ENCODE measurements at regions of chr2 and their contacts with region 1.

Region 1: GRCh38 chr2:241224018-241224850 is 35.8 kb downstream of the ANO7 start:
- DNase-seq: peak; percentile 40 to 58
- ATAC-seq: peak; percentile 16 to 72 (median 57)
- H3K4me3 ChIP-seq: no peak overlapping the region
- H3K27ac ChIP-seq: peak overlapping the region in 3 of 10 donors; percentile 18 to 30 (median 29)
- H3K4me1 ChIP-seq: peaks cover 2 to 50% (median 23%) of the 10 kb centered on the region in 9 donors
- H3K27me3 ChIP-seq: no peaks in the 10 kb centered on the region
- CTCF ChIP-seq: no peak

Region 2: DNA sequence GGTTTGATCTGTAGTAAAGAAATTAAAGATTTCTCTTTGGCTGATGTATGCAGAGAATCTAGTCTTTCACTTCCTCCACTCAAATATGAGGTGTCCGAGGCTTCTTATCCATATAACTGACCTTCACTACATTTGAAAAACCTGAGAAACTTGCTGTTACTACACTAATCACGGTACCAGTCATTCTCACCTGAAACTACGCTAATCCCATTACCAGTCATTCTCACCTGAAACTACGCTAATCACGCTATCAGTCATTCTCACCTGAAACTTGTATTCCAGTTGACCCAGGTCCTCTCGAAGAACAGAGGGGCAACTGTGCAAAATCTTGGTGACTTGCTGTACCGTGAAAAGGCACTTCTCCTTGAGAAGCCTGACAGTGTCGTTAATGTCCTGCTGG is 127.3 kb before region 1 on chr2:
- intact Hi-C with region 1: loop called in 2 of 10 experiments (anchors 10 kb)
- DNase-seq: no peak
- ATAC-seq: no peak
- H3K4me3 ChIP-seq: no peak overlapping the region
- H3K27ac ChIP-seq: no peak overlapping the region
- H3K4me1 ChIP-seq: peaks cover 6 to 19% (median 13%) of the 10 kb centered on the region in 9 donors
- H3K27me3 ChIP-seq: no peaks in the 10 kb centered on the region
- CTCF ChIP-seq: no peak

Region 3: DNA sequence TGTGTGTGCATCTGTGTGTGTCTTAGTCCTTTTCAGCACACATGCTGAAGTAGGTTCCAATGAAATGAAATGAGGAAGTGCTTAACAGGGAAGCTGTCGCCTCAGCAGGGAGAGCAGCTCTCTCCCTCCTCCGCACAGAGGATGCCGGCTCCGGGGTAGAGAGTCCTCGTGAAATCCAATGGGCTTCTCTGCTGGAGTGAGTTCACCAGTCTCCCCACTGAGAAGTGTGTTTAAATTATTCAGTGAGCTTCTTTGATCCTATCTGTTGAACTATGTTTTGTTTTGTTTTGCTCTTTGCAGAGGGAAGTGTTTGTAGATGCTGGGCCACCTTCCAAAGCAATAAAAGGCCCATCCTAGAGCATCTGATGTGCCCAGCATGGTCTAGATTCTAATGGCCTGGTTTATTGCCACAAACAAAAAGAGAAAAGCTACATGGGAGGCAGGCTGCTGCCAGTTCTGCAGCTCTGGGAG is 67.2 kb before region 1 on chr2:
- intact Hi-C with region 1: loop called in 1 of 10 experiments (anchors 5 kb)
- DNase-seq: no peak
- ATAC-seq: no peak
- H3K4me3 ChIP-seq: no peak overlapping the region
- H3K27ac ChIP-seq: no peak overlapping the region
- H3K4me1 ChIP-seq: peaks cover under 1 to 15% (median 9%) of the 10 kb centered on the region in 9 donors
- H3K27me3 ChIP-seq: no peaks in the 10 kb centered on the region
- CTCF ChIP-seq: no peak

Measured in heart right ventricle (tissue), 16 donors.